Activated CD4-positive, alpha-beta T cell treated with anti-CD3 and anti-CD28 coated beads for 36 hours (primary cell): ENCODE measurements at regions of chr11 and their contacts with region 1.

Region 1: GRCh38 chr11:65329944-65330403 is 3.7 kb upstream of the DPF2 start:
- DNase-seq: peak; percentile 92
- ATAC-seq: peak; percentile 35
- H3K4me3 Mint-ChIP-seq: no peak overlapping the region
- H3K27ac Mint-ChIP-seq: no peak overlapping the region
- H3K4me1 Mint-ChIP-seq: peaks cover 12% of the 10 kb centered on the region
- H3K27me3 Mint-ChIP-seq: no peaks in the 10 kb centered on the region

Region 2: DNA sequence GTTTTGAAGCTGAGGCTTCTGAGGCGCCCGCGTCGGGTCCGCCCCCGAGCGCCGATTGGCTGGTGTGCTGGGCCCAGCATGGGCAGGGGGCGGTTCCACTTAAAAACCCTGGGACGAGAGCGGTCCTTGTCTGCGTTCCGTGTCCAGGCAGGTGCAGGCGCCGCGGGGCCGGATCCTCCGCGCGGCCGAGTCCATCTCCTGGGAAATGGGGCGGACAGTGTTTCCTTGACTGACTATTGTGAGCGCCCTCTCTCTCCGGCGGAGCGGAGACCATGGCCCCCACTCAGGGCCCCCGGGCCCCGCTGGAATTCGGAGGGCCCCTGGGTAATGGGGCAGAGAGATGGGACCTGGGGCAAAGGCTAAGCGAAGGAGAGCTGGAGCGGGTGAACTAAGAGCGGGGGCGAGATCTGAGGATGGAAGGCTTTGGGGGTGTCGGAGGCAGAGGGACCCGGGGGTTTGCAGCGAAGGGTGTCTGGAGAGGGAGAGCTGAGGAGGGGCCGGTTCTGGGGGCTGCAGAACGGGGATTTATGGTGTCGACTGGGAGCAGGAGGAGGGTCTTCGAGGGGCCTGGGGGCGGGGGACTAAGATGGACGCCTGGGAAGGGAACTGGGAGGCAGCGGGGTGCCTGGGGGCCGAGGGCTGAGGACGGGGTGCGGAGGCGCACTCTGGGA is 218.1 kb before region 1 on chr11 and contains the start of gene TM7SF2:
- CTCF ChIA-PET with region 1: interaction called, 10 read pairs
- POLR2A ChIA-PET with region 1: no interaction called
- intact Hi-C with region 1: no loop called
- DNase-seq: peak; percentile 98
- ATAC-seq: peak; percentile 78
- H3K4me3 Mint-ChIP-seq: peak within 1 kb of the TSS; percentile 83
- H3K27ac Mint-ChIP-seq: peak within 1 kb of the TSS; percentile 74
- H3K4me1 Mint-ChIP-seq: peaks cover 50% of the 10 kb centered on the region
- H3K27me3 Mint-ChIP-seq: no peaks in the 10 kb centered on the region
- total RNA-seq, gene TM7SF2: 17.4 to 18.1 TPM

Region 3: DNA sequence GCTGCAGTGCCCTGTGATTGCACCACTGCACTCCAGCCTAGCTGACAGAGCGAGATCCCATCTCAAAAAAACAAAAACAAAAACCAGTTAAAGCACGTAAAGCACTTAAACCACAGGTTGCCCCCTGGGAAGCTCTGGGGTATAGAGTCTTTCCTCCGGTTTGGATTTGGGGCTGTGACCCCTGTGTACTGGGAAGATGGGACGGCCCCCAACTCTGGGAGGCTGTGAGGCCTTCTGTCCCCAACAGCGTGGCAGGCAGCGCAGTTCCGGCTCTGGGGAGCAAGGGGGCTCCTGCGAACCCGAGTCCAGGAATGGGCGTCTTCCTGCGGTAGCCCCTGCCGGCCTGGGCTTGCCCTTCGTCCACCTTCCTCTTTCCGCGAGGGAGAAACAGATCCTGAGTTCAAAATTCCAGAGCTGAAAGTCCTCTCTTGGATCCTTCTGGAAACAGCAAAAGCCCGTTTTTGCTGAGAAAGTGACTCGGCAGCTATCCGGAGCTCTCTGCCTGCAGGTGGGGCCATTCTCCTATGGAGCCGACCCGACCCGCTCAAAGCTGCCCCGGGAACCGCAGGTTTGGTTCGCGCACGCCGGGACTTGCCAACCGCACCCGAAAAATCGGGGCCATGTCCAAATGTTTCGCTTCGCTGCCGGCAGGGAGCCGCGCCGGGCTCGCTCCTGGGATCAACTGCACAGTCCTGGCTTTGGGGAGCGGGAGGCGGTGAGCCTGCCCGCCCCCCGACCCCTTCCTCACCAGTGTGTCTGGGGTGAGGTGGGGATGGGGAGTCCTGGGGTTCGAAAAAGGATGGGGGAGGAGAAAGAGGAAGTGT is 104.5 kb before region 1 on chr11:
- CTCF ChIA-PET with region 1: interaction called, 75 read pairs
- POLR2A ChIA-PET with region 1: no interaction called
- intact Hi-C with region 1: loop called in 1 of 2 experiments (anchors 1 kb)
- DNase-seq: peak; percentile 81
- ATAC-seq: peak; percentile 88
- H3K4me3 Mint-ChIP-seq: peak overlapping the region; percentile 71
- H3K27ac Mint-ChIP-seq: no peak overlapping the region
- H3K4me1 Mint-ChIP-seq: peaks cover 15% of the 10 kb centered on the region
- H3K27me3 Mint-ChIP-seq: peaks cover 21% of the 10 kb centered on the region

Region 4: GRCh38 chr11:65274735-65275682 is 55.0 kb before region 1 on chr11:
- CTCF ChIA-PET with region 1: interaction called, 31 read pairs
- POLR2A ChIA-PET with region 1: no interaction called
- intact Hi-C with region 1: loop called in 1 of 2 experiments (anchors 1 kb)
- DNase-seq: peak; percentile 56
- ATAC-seq: peak; percentile 39
- H3K4me3 Mint-ChIP-seq: no peak overlapping the region
- H3K27ac Mint-ChIP-seq: no peak overlapping the region
- H3K4me1 Mint-ChIP-seq: peaks cover 16% of the 10 kb centered on the region
- H3K27me3 Mint-ChIP-seq: no peaks in the 10 kb centered on the region

Region 5: GRCh38 chr11:65340226-65340625 is 10.3 kb after region 1 on chr11:
- CTCF ChIA-PET with region 1: interaction called, 30 read pairs
- POLR2A ChIA-PET with region 1: interaction called, 3 read pairs
- intact Hi-C with region 1: no loop called
- DNase-seq: no peak
- ATAC-seq: no peak
- H3K4me3 Mint-ChIP-seq: no peak overlapping the region
- H3K27ac Mint-ChIP-seq: no peak overlapping the region
- H3K4me1 Mint-ChIP-seq: peaks cover 25% of the 10 kb centered on the region
- H3K27me3 Mint-ChIP-seq: no peaks in the 10 kb centered on the region

Region 6: DNA sequence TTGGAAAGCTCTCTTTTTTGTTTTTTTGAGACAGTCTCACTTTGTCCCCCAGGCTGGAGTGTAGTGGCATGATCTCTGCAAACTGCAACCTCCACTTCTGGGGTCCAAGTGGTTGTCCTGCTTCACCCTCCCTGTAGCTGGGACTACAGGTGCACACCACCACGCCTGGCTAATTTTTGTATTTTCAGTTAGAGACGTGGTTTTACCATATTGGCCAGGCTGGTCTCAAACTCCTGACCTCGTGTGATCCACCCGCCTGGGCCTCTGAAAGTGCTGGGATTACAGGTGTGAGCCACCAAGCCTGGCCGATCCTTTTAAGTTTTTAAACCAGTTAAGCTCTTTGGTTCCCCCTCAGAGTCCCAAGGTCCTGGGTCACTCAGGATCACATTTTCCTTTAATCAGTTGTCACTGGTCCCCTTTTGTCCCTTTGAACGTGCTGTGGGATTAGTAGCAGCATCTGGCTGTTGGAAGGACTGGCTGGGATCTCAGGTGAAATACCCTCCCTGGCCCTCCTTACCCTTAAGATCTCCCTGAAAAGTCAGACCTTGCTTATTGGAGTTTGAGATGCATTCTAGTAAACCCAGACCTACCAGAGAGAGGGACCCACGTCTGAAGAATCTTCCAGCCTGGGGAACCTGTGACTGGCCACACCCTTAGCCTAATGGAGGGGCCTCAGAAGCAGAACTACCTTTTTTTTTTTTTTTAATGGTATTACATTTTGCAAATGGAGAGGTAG is 177.0 kb after region 1 on chr11:
- CTCF ChIA-PET with region 1: interaction called, 5 read pairs
- POLR2A ChIA-PET with region 1: interaction called, 10 read pairs
- intact Hi-C with region 1: no loop called
- DNase-seq: peak; percentile 75
- ATAC-seq: peak; percentile 51
- H3K4me3 Mint-ChIP-seq: no peak overlapping the region
- H3K27ac Mint-ChIP-seq: no peak overlapping the region
- H3K4me1 Mint-ChIP-seq: peaks cover 60% of the 10 kb centered on the region
- H3K27me3 Mint-ChIP-seq: no peaks in the 10 kb centered on the region

Region 7: GRCh38 chr11:65988791-65989592 is 659.0 kb after region 1 on chr11:
- CTCF ChIA-PET with region 1: no interaction called
- POLR2A ChIA-PET with region 1: no interaction called
- intact Hi-C with region 1: no loop called
- DNase-seq: peak; percentile 95
- ATAC-seq: peak; percentile 99
- H3K4me3 Mint-ChIP-seq: no peak overlapping the region
- H3K27ac Mint-ChIP-seq: peak overlapping the region; percentile 59
- H3K4me1 Mint-ChIP-seq: peaks cover 2% of the 10 kb centered on the region
- H3K27me3 Mint-ChIP-seq: no peaks in the 10 kb centered on the region